ENCODE measurements at regions of chr19 and their contacts with region 1.

Region 1: GRCh38 chr19:29873024-29873800 is 61.4 kb downstream of the CCNE1 start:
- H3K4me3 Mint-ChIP-seq: peak overlapping the region; percentile 30
- H3K27ac Mint-ChIP-seq: no peak overlapping the region
- H3K4me1 Mint-ChIP-seq: peaks cover 21% of the 10 kb centered on the region
- H3K27me3 Mint-ChIP-seq: peaks cover 35% of the 10 kb centered on the region

Region 2: DNA sequence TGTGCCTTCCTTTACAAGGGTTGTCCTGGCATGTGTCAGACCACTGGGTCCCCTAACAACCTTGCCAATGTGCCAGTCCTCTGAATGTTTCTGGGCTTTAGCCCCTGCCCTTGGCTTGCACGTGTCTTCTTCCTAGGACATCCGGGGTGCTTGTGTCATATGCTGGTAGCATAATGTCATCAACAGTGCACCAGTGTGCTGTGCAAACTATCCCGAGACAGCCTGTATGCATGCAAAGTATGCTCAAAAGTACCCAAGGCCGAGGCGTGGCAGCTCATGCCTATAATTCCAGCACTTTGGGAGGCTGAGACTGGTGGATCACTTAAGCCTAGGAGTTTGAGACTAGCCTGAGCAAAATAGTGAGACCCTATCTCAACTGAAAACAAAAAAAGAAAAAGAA is 137.4 kb before region 1 on chr19:
- intact Hi-C with region 1: loop called (anchors 1 kb)
- H3K4me3 Mint-ChIP-seq: no peak overlapping the region
- H3K27ac Mint-ChIP-seq: no peak overlapping the region
- H3K4me1 Mint-ChIP-seq: no peaks in the 10 kb centered on the region
- H3K27me3 Mint-ChIP-seq: peaks cover 2% of the 10 kb centered on the region

Region 3: GRCh38 chr19:29760752-29761502 is 112.3 kb before region 1 on chr19:
- intact Hi-C with region 1: loop called (anchors 1 kb)
- H3K4me3 Mint-ChIP-seq: no peak overlapping the region
- H3K27ac Mint-ChIP-seq: no peak overlapping the region
- H3K4me1 Mint-ChIP-seq: peaks cover 5% of the 10 kb centered on the region
- H3K27me3 Mint-ChIP-seq: peaks cover 11% of the 10 kb centered on the region

Region 4: DNA sequence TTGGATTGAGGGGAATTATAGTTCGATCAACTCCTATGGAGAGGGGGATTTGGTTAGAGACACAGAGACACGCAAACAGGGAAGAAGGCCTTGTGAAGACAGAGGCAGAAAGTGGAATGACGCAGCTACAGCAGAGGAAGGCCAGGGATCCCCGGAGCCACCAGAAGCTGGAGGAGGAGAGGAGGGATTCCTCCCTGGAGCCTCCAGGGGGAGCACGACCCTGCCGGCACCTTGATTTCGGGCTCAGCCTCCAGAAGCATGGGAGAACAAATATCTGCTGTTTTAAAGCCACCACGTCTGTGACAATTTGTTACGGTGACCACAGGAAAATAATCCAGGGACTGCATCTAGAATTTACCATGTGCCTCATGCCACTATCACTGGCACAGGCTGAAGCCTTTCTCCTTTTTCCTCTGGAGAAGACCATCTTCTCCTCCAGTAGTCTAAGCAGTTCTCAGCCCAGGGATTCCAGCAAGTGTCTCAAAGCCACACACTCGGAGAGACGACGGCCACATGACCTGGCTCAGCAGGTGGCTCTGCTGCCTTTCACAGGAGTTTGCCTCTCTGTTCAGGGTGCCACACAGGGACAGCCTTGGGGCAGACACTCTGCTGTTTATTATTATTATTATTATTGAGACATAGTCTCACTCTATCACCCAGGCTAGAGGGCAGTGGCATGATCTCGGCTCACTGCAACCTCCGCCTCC is 101.4 kb before region 1 on chr19:
- intact Hi-C with region 1: loop called (anchors 1 kb)
- H3K4me3 Mint-ChIP-seq: no peak overlapping the region
- H3K27ac Mint-ChIP-seq: no peak overlapping the region
- H3K4me1 Mint-ChIP-seq: peaks cover 11% of the 10 kb centered on the region
- H3K27me3 Mint-ChIP-seq: no peaks in the 10 kb centered on the region